CD4-positive, alpha-beta memory T cell (primary cell): ENCODE measurements at regions of chr19 and their contacts with region 1.

Region 1: DNA sequence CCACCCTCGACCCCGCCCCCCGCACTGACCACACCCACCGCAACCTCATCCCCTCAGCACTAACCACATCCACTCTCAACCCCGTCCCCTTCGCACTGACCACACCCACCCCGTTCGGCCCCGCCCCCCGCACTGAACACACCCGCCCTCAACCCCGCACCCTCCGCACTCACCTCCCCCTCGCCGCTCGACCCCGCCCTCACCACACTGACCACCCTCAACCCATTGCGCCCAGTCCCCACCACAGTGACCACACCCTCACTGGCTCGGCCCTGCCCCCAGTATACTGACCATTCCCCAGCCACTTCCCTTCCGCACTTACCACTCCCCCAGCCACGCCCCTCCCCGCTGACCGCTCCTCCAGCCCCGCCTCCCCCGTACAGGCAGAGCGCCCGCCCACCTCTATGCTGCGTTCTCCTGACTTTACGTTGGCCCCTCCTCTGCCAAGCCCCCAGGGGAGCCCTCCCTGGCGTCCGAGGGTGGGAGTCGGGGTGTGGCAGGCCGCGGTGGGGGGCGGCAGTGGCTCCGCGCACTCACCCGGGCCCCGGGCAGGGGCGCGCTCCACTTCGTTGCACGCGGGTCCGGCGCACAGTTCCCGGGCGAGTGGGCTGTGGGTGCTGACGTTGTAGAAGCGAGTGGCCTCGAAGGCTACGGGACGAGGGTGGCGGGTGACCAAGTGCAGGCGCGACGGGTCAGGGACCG is 8.5 kb downstream of the F2RL3 start:
- DNase-seq: peak in 4 of 5 donors; percentile 46 to 67 (median 54)
- H3K4me3 ChIP-seq: peak overlapping the region in 1 of 2 donors; percentile 47
- H3K4me3 Mint-ChIP-seq: peak overlapping the region in 7 of 8 donors; percentile 5 to 83 (median 72)
- H3K27ac ChIP-seq: no peak overlapping the region
- H3K27ac Mint-ChIP-seq: peak overlapping the region in 2 of 7 donors; percentile 9 to 78
- H3K4me1 ChIP-seq: peaks cover 20% of the 10 kb centered on the region
- H3K4me1 Mint-ChIP-seq: peaks cover 10 to 39% (median 23%) of the 10 kb centered on the region in 4 donors
- H3K27me3 ChIP-seq: no peaks in the 10 kb centered on the region
- H3K27me3 Mint-ChIP-seq: peaks cover 4 to 5% of the 10 kb centered on the region in 2 donors

Region 2: GRCh38 chr19:16714702-16715287 is 182.5 kb before region 1 on chr19:
- CTCF ChIA-PET with region 1: no interaction called
- POLR2A ChIA-PET with region 1: no interaction called
- intact Hi-C with region 1: no loop called
- DNase-seq: peak in 4 of 5 donors; percentile 15 to 31 (median 24)
- H3K4me3 ChIP-seq: no peak overlapping the region
- H3K4me3 Mint-ChIP-seq: no peak overlapping the region
- H3K27ac ChIP-seq: no peak overlapping the region
- H3K27ac Mint-ChIP-seq: no peak overlapping the region
- H3K4me1 ChIP-seq: no peaks in the 10 kb centered on the region
- H3K4me1 Mint-ChIP-seq: peaks cover 0 to 5% (median 3%) of the 10 kb centered on the region in 4 donors
- H3K27me3 ChIP-seq: no peaks in the 10 kb centered on the region
- H3K27me3 Mint-ChIP-seq: peaks cover 5 to 6% of the 10 kb centered on the region in 2 donors

Region 3: DNA sequence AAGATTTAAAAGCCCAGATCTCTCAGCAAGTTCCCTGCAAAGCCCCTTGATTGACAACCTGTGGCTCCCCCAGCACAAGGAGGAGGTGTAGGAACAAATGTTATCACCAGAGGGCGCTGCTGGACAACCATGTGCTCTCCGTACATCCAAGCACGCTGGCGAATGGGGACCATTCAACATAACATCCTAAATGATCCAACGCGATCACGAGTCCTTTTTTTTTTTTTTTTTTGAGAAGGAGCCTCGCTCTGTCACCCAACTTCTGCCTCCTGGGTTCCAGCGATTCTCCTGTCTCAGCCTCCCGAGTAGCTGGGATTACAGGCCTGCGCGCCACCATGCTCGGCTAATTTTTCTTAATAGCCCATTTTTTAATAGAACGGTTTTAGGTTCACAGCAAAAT is 125.7 kb before region 1 on chr19:
- CTCF ChIA-PET with region 1: no interaction called
- POLR2A ChIA-PET with region 1: no interaction called
- intact Hi-C with region 1: loop called (anchors 5 kb)
- DNase-seq: peak; percentile 61 to 69 (median 63)
- H3K4me3 ChIP-seq: no peak overlapping the region
- H3K4me3 Mint-ChIP-seq: no peak overlapping the region
- H3K27ac ChIP-seq: no peak overlapping the region
- H3K27ac Mint-ChIP-seq: no peak overlapping the region
- H3K4me1 ChIP-seq: no peaks in the 10 kb centered on the region
- H3K4me1 Mint-ChIP-seq: peaks cover 0 to 2% (median 0%) of the 10 kb centered on the region in 4 donors
- H3K27me3 ChIP-seq: no peaks in the 10 kb centered on the region
- H3K27me3 Mint-ChIP-seq: peaks cover 16 to 18% of the 10 kb centered on the region in 2 donors

Region 4: GRCh38 chr19:17001603-17002183 is 104.4 kb after region 1 on chr19:
- CTCF ChIA-PET with region 1: no interaction called
- POLR2A ChIA-PET with region 1: no interaction called
- intact Hi-C with region 1: loop called (anchors 2 kb)
- DNase-seq: peak; percentile 84 to 96 (median 96)
- H3K4me3 ChIP-seq: no peak overlapping the region
- H3K4me3 Mint-ChIP-seq: peak overlapping the region; percentile 73 to 94 (median 79)
- H3K27ac ChIP-seq: peak overlapping the region; percentile 63
- H3K27ac Mint-ChIP-seq: peak overlapping the region; percentile 93 to 99 (median 97)
- H3K4me1 ChIP-seq: peaks cover 28% of the 10 kb centered on the region
- H3K4me1 Mint-ChIP-seq: peaks cover 17 to 33% (median 21%) of the 10 kb centered on the region in 4 donors
- H3K27me3 ChIP-seq: no peaks in the 10 kb centered on the region
- H3K27me3 Mint-ChIP-seq: no peaks in the 10 kb centered on the region